RWPE1 (cell line): ENCODE measurements at regions of chr1 and their contacts with region 1.

Region 1: GRCh38 chr1:113072757-113073478 is at the start of gene LRIG2:
- DNase-seq: peak; percentile 96
- H3K27ac ChIP-seq: peak within 1 kb of the TSS; percentile 87
- CTCF ChIP-seq: peak; percentile 94

Region 2: DNA sequence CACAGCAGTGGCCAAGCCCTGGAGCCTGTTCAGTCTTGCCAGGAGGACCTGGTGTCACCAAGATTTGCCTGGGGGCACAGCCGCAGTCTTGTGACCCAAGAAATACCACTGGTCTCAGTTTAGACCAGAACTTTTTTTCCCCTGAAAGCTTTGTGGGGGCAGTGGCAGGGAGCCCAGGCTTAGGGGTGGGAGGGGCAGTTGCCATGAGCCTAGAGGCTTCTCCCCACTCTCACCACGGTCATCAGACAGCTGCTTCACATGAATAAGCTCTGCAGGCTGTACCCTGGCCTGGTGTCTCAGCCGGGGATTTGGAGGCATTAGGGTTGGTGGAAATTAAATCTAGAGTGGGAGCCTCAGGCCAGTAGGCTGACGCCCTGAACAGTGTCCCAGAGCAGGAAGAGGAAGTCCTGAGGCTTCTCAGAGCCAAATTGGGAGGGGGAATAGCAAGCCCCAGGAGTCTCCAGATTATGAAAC is 190.6 kb before region 1 on chr1:
- CTCF ChIA-PET with region 1: interaction called, 17 read pairs
- POLR2A ChIA-PET with region 1: no interaction called
- DNase-seq: no peak
- H3K27ac ChIP-seq: peak overlapping the region; percentile 26
- CTCF ChIP-seq: no peak

Region 3: GRCh38 chr1:113057006-113057405 is 15.9 kb before region 1 on chr1:
- CTCF ChIA-PET with region 1: interaction called, 12 read pairs
- POLR2A ChIA-PET with region 1: no interaction called
- DNase-seq: no peak
- H3K27ac ChIP-seq: no peak overlapping the region
- CTCF ChIP-seq: no peak

Region 4: GRCh38 chr1:113415310-113416070 is 342.6 kb after region 1 on chr1:
- CTCF ChIA-PET with region 1: no interaction called
- POLR2A ChIA-PET with region 1: no interaction called
- DNase-seq: no peak
- H3K27ac ChIP-seq: no peak overlapping the region
- CTCF ChIP-seq: no peak